ENCODE measurements at regions of chr1 and their contacts with region 1.

Region 1: GRCh38 chr1:204763706-204764427 is 78.3 kb upstream of the LRRN2 start:
- DNase-seq: peak; percentile 75
- ATAC-seq: peak; percentile 97
- H3K4me3 ChIP-seq: no peak overlapping the region
- H3K4me3 Mint-ChIP-seq: no peak overlapping the region
- H3K27ac ChIP-seq: no peak overlapping the region
- H3K27ac Mint-ChIP-seq: no peak overlapping the region
- H3K4me1 ChIP-seq: peaks cover 7 to 8% of the 10 kb centered on the region in 2 donors
- H3K4me1 Mint-ChIP-seq: peaks cover 6% of the 10 kb centered on the region
- H3K27me3 ChIP-seq: peaks cover 0 to 18% (median 1%) of the 10 kb centered on the region in 4 experiments
- H3K27me3 Mint-ChIP-seq: peaks cover 30% of the 10 kb centered on the region
- CTCF ChIP-seq: peak; percentile 88

Region 2: DNA sequence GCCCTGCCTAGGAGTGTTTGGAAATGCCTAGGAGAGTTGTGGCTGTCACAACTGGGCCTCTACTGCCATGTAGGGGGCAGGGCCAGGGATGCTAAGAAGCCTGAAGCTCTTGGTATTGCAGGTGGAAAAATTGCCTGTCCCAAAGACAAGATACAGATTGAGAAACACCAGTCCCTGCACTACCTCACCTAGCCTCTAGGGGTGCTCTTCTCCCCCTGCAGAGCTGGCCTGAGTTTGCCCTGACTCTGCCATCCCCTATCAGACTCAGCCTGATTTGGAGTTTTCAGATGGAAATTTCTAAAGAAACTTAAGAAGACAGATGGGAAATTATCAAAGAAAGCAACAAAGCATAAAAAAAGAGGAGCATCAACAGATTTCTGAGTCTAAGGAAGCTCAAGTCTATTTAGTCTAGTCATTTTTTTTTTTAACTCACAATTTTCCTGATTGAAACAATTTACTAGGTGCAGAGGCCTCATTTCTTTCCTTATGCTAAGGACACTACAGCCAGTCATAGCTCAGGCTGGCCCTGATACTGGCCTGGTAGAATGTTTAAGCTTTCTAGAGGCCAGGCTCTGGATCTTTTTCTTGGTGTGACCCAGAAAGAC is 16.9 kb before region 1 on chr1:
- CTCF ChIA-PET with region 1: interaction called, 12 read pairs
- POLR2A ChIA-PET with region 1: no interaction called
- intact Hi-C with region 1: no loop called
- DNase-seq: peak; percentile 69
- ATAC-seq: peak; percentile 88
- H3K4me3 ChIP-seq: no peak overlapping the region
- H3K4me3 Mint-ChIP-seq: no peak overlapping the region
- H3K27ac ChIP-seq: no peak overlapping the region
- H3K27ac Mint-ChIP-seq: no peak overlapping the region
- H3K4me1 ChIP-seq: no peaks in the 10 kb centered on the region
- H3K4me1 Mint-ChIP-seq: no peaks in the 10 kb centered on the region
- H3K27me3 ChIP-seq: peaks cover 0 to 17% (median 1%) of the 10 kb centered on the region in 4 experiments
- H3K27me3 Mint-ChIP-seq: peaks cover 33% of the 10 kb centered on the region
- CTCF ChIP-seq: peak; percentile 96

Region 3: DNA sequence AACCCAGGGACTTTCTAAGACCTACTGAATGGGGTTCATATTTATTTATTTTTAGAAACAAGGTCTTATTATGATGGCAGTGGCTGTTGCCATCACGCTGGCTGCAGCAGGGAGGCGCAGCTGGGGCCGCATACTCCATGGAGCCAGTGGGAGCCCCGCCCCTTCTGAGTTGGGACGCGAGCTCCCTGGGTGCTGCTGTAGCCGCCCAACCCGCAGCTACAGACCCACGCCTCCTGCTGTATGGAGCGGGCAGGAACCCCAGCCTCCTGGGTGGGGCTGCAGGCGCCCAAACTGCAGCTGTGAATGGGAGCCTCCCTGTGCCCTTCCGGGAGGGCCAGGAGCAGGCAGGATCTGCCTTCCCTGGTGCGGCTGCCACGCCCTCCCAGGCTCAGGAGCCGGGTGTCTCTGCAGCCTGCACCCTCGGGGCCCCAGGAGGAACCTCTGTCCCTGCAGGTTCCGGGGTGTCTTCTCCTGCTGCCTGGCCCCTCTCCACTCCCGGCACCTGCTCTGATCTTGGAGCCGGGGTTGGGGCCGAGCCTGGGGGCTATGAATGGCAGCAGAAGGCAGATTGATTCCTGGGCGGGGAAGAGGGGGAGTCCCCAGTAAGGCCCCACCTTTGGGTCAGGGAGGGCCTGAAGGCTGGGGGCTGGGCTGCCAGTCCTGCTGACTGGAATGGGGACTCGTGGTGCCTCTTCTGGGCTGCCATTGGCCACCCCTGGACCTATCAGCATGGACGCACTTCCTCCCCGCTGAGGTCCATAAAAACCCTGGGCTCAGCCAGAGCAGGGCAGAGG is 11.8 kb before region 1 on chr1:
- CTCF ChIA-PET with region 1: interaction called, 13 read pairs
- POLR2A ChIA-PET with region 1: no interaction called
- intact Hi-C with region 1: no loop called
- DNase-seq: no peak
- ATAC-seq: no peak
- H3K4me3 ChIP-seq: no peak overlapping the region
- H3K4me3 Mint-ChIP-seq: no peak overlapping the region
- H3K27ac ChIP-seq: no peak overlapping the region
- H3K27ac Mint-ChIP-seq: no peak overlapping the region
- H3K4me1 ChIP-seq: no peaks in the 10 kb centered on the region
- H3K4me1 Mint-ChIP-seq: no peaks in the 10 kb centered on the region
- H3K27me3 ChIP-seq: peaks cover 0 to 14% (median 0%) of the 10 kb centered on the region in 4 experiments
- H3K27me3 Mint-ChIP-seq: peaks cover 25% of the 10 kb centered on the region
- CTCF ChIP-seq: no peak

Region 4: GRCh38 chr1:204819495-204819894 is 55.6 kb after region 1 on chr1:
- CTCF ChIA-PET with region 1: no interaction called
- POLR2A ChIA-PET with region 1: no interaction called
- intact Hi-C with region 1: no loop called
- DNase-seq: no peak
- ATAC-seq: no peak
- H3K4me3 ChIP-seq: no peak overlapping the region
- H3K4me3 Mint-ChIP-seq: no peak overlapping the region
- H3K27ac ChIP-seq: no peak overlapping the region
- H3K27ac Mint-ChIP-seq: no peak overlapping the region
- H3K4me1 ChIP-seq: no peaks in the 10 kb centered on the region
- H3K4me1 Mint-ChIP-seq: no peaks in the 10 kb centered on the region
- H3K27me3 ChIP-seq: peaks cover 0 to 12% (median 6%) of the 10 kb centered on the region in 4 experiments
- H3K27me3 Mint-ChIP-seq: peaks cover 43% of the 10 kb centered on the region
- CTCF ChIP-seq: no peak